ENCODE measurements at regions of chr5 and their contacts with region 1.

Region 1: DNA sequence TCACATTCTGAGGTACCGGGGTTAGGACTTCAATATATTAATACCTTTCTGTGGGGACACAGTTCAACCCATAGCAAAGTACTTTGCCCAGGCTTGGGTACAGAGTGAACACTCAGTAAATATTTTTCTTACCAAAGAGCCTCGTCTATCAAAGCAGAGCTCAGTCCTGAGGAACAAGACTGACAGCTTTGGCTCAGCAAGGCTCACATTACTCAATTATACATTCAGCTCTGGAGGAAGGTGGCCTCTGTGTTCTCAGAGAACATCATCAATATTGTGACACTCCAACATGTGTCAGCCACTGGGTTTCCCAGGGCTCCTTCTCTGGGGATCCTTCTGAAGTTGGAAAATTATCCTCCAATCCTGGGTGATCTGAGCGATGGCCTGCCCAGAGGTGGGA is 186.4 kb downstream of the NMUR2 start:
- DNase-seq: peak; percentile 18
- H3K4me3 Mint-ChIP-seq: no peak overlapping the region
- H3K27ac Mint-ChIP-seq: no peak overlapping the region
- H3K4me1 Mint-ChIP-seq: no peaks in the 10 kb centered on the region
- H3K27me3 Mint-ChIP-seq: no peaks in the 10 kb centered on the region
- CTCF ChIP-seq: no peak

Region 2: DNA sequence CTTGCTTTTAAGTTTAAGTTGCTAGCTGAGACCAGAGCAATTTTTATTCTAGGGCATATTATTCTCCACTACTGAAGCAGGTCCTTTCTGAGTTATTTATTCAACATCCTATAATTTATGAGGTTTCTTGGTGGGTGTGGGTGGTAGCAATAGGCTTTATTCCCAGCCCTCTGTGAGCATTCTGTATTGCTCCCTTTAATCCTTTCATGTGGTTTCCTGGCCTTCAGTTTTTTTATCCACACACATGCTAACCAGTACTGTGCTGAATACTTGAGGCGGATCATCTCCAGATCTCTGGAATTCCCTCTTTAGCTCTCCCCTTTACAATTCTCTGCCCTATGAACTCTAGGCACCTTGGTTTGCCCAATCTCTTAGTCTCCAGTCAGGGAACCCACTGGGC is 202.3 kb before region 1 on chr5:
- CTCF ChIA-PET with region 1: no interaction called
- intact Hi-C with region 1: no loop called
- DNase-seq: no peak
- H3K4me3 Mint-ChIP-seq: no peak overlapping the region
- H3K27ac Mint-ChIP-seq: no peak overlapping the region
- H3K4me1 Mint-ChIP-seq: no peaks in the 10 kb centered on the region
- H3K27me3 Mint-ChIP-seq: no peaks in the 10 kb centered on the region
- CTCF ChIP-seq: no peak

Region 3: GRCh38 chr5:152264645-152265254 is 46.1 kb after region 1 on chr5:
- CTCF ChIA-PET with region 1: no interaction called
- intact Hi-C with region 1: loop called (anchors 1 kb)
- DNase-seq: peak; percentile 23
- H3K4me3 Mint-ChIP-seq: no peak overlapping the region
- H3K27ac Mint-ChIP-seq: no peak overlapping the region
- H3K4me1 Mint-ChIP-seq: peaks cover 14% of the 10 kb centered on the region
- H3K27me3 Mint-ChIP-seq: peaks cover 24% of the 10 kb centered on the region
- CTCF ChIP-seq: no peak